Activated naive CD4-positive, alpha-beta T cell treated with anti-CD3 and anti-CD28 coated beads for 36 hours (primary cell): ENCODE measurements at regions of chr6 and their contacts with region 1.

Region 1: GRCh38 chr6:53309059-53309900 is 39.5 kb downstream of the ELOVL5 start:
- DNase-seq: no peak
- H3K4me3 Mint-ChIP-seq: no peak overlapping the region
- H3K27ac Mint-ChIP-seq: no peak overlapping the region
- H3K4me1 Mint-ChIP-seq: peaks cover 80% of the 10 kb centered on the region
- H3K27me3 Mint-ChIP-seq: no peaks in the 10 kb centered on the region

Region 2: DNA sequence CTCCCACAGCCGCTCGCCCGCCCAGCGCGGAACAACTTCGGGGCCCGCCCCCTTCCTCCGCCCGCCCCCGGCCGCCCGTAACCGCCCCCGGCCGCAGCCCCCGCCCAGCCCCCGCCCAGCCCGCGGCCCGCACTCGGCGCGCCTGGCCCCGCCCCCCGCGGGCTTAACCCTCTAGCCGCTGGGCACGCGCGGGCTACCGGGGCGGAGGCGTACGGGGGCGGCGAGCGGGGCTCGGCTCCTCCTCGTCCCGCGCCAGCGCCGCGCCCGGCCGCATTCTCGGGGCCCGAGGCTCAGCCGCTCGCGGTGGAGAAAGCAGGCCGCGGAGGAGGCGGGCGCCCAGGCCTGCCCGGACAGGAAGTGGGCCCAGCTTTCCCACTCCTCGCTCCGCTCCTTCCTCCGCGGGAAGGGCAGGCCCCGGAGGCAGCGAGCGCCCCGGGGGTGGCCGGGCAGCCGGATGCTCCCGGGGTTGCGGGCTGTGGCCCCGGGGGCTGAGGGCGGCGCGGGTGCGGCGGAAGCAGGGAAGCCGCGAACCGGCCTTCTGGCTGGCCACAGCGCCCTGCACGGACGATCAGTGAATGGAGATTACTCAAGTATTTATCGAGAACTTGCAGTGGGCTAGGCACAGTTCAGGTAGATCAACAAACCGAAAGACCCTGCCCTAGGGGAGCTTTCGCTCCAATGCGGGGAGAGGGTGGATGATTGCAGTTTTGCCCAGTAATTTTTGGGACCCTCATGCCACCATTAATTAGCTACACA is 732.1 kb before region 1 on chr6 and contains the start of gene TRAM2:
- CTCF ChIA-PET with region 1: no interaction called
- intact Hi-C with region 1: loop called (anchors 10 kb)
- DNase-seq: peak; percentile 65
- H3K4me3 Mint-ChIP-seq: peak within 1 kb of the TSS; percentile 78
- H3K27ac Mint-ChIP-seq: peak within 1 kb of the TSS; percentile 65
- H3K4me1 Mint-ChIP-seq: peaks cover 43% of the 10 kb centered on the region
- H3K27me3 Mint-ChIP-seq: no peaks in the 10 kb centered on the region
- total RNA-seq, gene TRAM2: 2.5 to 2.9 TPM

Region 3: DNA sequence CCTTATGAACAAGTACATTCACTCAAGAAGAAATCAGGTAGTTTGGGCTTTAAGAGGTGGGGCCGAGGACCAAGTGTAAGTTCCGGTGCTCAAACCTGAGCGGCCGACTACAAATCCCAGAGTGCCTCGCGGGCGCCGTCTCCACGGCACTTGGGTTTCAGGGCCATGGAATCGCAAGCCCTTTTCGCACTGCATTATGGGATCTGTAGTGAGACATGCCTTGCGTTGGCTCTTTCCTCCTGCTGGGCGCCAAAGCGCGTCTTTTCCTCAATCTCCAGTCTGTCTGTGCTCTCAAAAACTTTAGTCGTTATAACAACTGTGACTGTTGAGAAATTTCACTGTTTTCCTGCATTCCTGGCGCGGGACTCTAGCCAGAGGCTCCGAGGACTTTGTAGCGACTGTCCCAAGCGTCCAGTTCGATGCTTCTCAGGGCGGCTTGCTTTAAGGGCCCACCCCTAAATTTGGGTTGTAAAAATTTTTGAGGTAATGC is 244.5 kb before region 1 on chr6:
- CTCF ChIA-PET with region 1: interaction called, 3 read pairs
- intact Hi-C with region 1: loop called (anchors 2 kb)
- DNase-seq: peak; percentile 99
- H3K4me3 Mint-ChIP-seq: peak overlapping the region; percentile 97
- H3K27ac Mint-ChIP-seq: peak overlapping the region; percentile 99
- H3K4me1 Mint-ChIP-seq: peaks cover 55% of the 10 kb centered on the region
- H3K27me3 Mint-ChIP-seq: no peaks in the 10 kb centered on the region

Region 4: DNA sequence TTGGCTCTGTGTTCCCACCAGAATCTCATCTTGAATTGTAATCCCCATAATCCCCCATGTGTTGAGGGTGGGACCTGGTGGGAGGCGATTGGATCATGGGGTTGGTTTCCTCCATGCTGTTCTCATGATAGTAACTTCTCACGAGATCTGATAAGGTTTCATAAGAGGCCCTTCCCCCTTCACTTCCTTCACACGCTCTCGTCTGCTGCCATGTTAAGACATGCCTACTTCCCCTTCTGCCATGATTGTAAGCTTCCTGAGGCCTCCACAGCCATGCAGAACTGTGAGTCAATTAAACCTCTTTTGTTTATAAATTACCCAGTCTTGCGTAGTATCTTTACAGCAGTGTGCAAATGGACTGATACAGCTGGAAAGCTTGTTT is 50.5 kb before region 1 on chr6:
- CTCF ChIA-PET with region 1: no interaction called
- intact Hi-C with region 1: no loop called
- DNase-seq: no peak
- H3K4me3 Mint-ChIP-seq: no peak overlapping the region
- H3K27ac Mint-ChIP-seq: no peak overlapping the region
- H3K4me1 Mint-ChIP-seq: no peaks in the 10 kb centered on the region
- H3K27me3 Mint-ChIP-seq: no peaks in the 10 kb centered on the region

Region 5: DNA sequence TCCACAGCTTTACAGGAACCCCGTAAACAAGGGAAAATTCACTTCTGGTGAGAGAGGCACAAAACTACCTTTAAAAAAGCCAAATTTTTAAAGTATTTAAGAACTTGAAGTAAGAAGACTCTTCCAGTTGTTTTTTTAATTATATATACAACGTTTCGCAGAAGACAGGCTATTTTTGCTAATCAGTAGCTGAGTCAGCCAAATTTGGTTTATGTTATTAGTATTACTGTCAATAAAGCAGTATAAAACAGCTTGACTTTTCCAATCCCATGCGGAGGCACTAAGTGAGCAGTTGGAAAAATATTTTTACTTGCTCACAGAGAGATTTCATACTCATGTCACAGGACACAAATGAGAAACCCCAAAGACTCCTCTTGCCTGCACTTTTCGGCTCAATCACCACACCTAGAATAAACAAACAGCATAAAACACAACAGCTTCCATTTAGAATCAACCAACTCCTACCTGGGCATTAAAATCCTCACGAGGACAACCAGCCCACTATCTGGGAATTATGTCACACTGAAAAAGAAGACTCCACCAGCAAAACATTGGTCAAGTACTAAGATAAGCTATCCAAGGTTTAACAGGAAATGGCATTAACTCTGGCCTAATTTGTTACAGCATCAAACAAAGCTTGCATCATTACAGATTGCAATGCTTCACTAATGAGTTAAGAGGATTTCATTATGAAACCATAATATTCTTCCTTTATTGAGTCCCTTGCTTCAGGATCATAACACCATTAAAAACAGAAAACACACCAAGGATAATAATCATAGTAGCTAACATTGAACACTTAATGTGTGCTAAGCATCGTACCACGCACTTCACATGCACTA is 13.1 kb after region 1 on chr6:
- CTCF ChIA-PET with region 1: interaction called, 4 read pairs
- intact Hi-C with region 1: loop called (anchors 1 kb)
- DNase-seq: no peak
- H3K4me3 Mint-ChIP-seq: no peak overlapping the region
- H3K27ac Mint-ChIP-seq: peak overlapping the region; percentile 24
- H3K4me1 Mint-ChIP-seq: peaks cover 56% of the 10 kb centered on the region
- H3K27me3 Mint-ChIP-seq: no peaks in the 10 kb centered on the region

Region 6: DNA sequence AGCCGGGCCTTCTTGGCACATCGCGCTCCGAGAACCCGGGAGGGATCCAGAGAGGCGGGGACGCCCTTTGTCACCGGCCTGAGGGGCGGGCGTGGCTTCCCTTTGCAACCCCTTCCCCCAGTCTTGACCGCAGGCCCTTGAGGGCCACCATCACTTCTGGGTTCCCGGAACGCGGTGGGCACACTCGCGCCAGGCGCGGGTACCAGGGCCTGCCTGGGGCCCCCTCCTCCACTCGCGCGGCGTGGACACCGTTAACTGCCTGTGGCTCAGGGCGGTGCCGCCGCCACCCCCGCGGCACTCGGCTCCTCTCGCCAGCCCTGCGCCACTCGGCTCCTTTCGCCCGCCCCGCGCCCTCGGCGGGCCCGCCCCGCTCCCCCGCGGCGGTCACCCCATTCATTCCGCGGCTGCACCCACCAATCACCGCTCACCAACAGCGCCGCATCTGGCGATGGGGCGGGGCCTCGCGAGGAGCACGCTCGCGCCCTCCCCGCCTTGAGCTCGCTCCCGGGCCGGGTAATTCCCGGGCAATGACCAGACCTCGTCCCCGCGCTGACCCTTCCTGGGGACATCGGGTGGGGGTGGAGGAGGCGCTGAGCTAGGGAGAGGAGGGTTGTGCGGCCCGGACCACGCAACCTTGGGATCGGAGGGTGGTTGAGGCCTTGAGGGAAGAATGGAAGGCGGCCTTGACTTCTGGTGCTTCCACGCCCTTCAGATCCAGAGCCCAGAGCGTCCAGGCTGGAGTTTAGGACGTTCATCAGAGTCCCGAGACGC is 50.0 kb after region 1 on chr6:
- CTCF ChIA-PET with region 1: no interaction called
- intact Hi-C with region 1: loop called (anchors 1 kb)
- DNase-seq: peak; percentile 94
- H3K4me3 Mint-ChIP-seq: peak overlapping the region; percentile 90
- H3K27ac Mint-ChIP-seq: peak overlapping the region; percentile 96
- H3K4me1 Mint-ChIP-seq: peaks cover 39% of the 10 kb centered on the region
- H3K27me3 Mint-ChIP-seq: no peaks in the 10 kb centered on the region

Region 7: GRCh38 chr6:53461041-53461656 is 151.9 kb after region 1 on chr6:
- CTCF ChIA-PET with region 1: no interaction called
- intact Hi-C with region 1: no loop called
- DNase-seq: no peak
- H3K4me3 Mint-ChIP-seq: no peak overlapping the region
- H3K27ac Mint-ChIP-seq: no peak overlapping the region
- H3K4me1 Mint-ChIP-seq: peaks cover 4% of the 10 kb centered on the region
- H3K27me3 Mint-ChIP-seq: no peaks in the 10 kb centered on the region

Region 8: DNA sequence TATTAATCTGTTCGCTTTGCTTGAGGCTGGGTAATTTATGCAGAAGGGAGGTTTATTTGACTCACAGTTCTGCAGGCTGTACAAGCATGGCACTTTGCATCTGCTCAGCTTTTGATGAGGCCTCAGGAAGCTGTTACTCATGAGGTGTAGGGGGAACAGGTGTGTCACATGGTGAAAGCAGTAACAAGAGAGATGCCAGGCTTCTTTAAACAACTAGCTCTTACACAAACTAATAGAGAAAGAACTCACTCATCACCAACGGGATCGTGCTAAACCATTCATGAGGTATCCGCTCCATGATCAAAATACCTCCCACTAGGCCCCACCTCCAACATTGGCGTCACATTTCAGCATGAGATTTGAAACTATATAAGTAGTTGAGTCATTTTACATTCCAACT is 270.1 kb after region 1 on chr6:
- CTCF ChIA-PET with region 1: no interaction called
- intact Hi-C with region 1: loop called (anchors 1 kb)
- DNase-seq: peak; percentile 70
- H3K4me3 Mint-ChIP-seq: no peak overlapping the region
- H3K27ac Mint-ChIP-seq: no peak overlapping the region
- H3K4me1 Mint-ChIP-seq: peaks cover 19% of the 10 kb centered on the region
- H3K27me3 Mint-ChIP-seq: no peaks in the 10 kb centered on the region

Region 9: DNA sequence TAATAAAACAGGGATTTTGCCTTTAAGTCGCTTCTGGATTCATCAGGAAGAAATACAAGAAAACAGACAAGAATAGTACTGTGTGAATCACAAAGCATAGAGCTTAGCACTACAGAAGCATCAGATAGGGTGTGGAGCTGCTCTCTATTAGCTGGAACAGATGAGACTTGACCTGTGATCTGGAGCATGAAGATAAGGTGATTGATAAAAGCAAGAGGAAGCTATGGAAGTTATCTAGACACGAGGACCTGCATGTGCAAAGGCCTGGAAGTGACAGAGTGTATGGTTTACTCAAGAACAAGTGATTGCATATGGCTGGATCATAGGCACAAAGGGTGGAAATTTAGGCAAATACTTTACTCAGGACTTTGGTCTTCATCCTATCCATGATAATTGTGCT is 689.0 kb after region 1 on chr6:
- CTCF ChIA-PET with region 1: no interaction called
- intact Hi-C with region 1: no loop called
- DNase-seq: no peak
- H3K4me3 Mint-ChIP-seq: no peak overlapping the region
- H3K27ac Mint-ChIP-seq: no peak overlapping the region
- H3K4me1 Mint-ChIP-seq: no peaks in the 10 kb centered on the region
- H3K27me3 Mint-ChIP-seq: peaks cover 9% of the 10 kb centered on the region